ENCODE measurements at regions of chr13 and their contacts with region 1.

Region 1: DNA sequence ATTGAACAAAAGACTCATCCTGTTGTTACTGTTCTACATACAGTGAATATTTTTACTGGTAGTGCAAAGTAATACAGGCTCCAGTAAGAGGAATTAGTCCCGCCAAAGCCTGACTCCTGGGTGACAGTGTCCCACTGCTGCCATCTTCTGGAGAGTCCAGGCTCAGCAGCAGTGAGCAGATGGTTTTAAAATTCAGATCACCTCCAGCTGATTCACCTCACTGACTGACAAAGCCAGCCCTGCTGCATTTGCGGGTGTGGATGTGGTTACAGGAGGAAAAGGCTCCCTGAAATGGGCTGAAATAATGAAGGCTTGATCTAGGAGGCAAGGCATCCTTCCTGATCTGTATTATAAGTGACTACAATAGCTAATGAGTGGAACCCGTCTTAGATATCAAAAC is 18.3 kb downstream of the PABPC3 start:
- DNase-seq: peak; percentile 80 to 87
- H3K4me3 ChIP-seq: no peak overlapping the region
- H3K4me3 Mint-ChIP-seq: no peak overlapping the region
- H3K27ac Mint-ChIP-seq: no peak overlapping the region
- H3K4me1 ChIP-seq: peaks cover 33% of the 10 kb centered on the region
- H3K4me1 Mint-ChIP-seq: peaks cover 23% of the 10 kb centered on the region
- H3K27me3 ChIP-seq: no peaks in the 10 kb centered on the region; the same call in 1 of the 2 replicates
- H3K27me3 Mint-ChIP-seq: no peaks in the 10 kb centered on the region
- CTCF ChIP-seq: peak; percentile 76 to 95

Region 2: DNA sequence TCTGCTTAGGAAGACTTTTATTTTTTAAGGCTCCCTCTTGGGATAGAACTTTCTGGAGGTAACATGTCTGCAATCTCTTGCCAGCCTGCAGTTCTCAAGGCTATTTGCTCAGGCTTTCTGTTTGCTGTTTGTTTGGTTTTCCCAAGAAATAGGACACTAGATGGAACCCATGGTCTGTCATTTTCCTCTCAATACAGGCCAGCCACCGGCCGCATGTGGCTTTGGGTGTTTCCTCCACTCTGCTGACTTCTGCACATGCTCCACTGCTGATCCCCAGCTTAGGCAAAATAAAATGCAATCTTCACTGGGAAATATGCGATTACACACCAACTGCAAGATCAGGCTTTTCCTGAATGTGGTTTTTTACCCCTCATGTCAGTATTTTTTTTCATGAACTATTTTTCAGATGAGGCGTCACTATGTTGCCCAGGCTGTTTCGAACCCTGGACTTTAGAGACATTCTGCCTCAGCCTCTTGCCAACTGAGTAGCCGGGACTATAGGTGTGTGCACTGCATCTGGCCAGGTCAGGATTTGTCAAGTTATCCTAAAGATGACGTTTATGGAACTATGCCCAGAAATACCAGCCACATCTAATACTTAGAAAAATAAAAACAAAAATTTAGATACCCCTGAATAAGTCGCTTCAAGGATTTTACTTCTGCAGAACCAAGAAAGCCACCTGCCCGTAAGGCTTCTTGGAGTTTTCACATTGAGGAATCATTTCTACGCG is 112.6 kb before region 1 on chr13:
- CTCF ChIA-PET with region 1: interaction called, 10 read pairs
- POLR2A ChIA-PET with region 1: interaction called, 5 read pairs
- intact Hi-C with region 1: loop called (anchors 1 kb)
- DNase-seq: peak in 1 of 2 experiments; percentile 14
- H3K4me3 ChIP-seq: no peak overlapping the region
- H3K4me3 Mint-ChIP-seq: no peak overlapping the region
- H3K27ac Mint-ChIP-seq: peak overlapping the region; percentile 65
- H3K4me1 ChIP-seq: peaks cover 10% of the 10 kb centered on the region
- H3K4me1 Mint-ChIP-seq: peaks cover 14% of the 10 kb centered on the region
- H3K27me3 ChIP-seq: no peaks in the 10 kb centered on the region
- H3K27me3 Mint-ChIP-seq: no peaks in the 10 kb centered on the region
- CTCF ChIP-seq: no peak

Region 3: DNA sequence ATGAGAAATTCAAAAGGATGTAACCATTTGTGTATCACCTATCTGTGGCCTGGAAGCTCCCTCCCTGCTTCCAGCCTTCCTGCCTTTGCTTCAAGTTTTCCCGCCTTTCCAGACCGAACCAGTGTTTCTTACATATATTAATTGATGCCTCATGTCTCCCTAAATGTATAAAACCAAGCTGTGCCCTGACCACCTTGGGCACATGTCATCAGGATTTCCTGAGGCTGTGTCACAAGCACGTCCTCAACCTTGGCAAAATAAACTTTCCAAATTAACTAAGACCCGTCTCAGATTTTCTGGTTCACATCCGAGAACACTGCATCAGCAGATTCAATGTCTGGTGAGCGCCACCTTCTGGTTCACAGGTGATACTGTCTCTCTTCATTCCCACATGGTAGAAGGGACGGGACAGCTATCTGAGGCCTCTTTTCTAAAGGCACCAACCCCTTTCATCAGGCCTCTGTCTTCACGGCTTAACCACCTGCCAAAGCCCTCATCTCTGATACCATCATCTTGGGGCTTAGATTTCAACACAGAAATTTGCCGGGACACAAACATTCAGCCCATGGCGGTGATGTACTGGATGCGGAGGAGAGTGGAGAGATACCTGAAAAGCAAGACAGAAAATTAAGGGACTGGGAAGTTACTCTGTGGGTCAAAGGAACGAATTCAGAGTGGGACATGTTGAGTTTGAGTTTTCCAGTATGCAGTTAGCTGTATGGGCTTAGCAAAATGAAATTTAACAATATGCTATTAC is 77.0 kb before region 1 on chr13:
- CTCF ChIA-PET with region 1: interaction called, 4 read pairs
- POLR2A ChIA-PET with region 1: no interaction called
- intact Hi-C with region 1: loop called (anchors 1 kb)
- DNase-seq: peak; percentile 57 to 70
- H3K4me3 ChIP-seq: no peak overlapping the region
- H3K4me3 Mint-ChIP-seq: no peak overlapping the region
- H3K27ac Mint-ChIP-seq: no peak overlapping the region
- H3K4me1 ChIP-seq: no peaks in the 10 kb centered on the region
- H3K4me1 Mint-ChIP-seq: no peaks in the 10 kb centered on the region
- H3K27me3 ChIP-seq: no peaks in the 10 kb centered on the region
- H3K27me3 Mint-ChIP-seq: peaks cover 15% of the 10 kb centered on the region
- CTCF ChIP-seq: peak; percentile 84 to 89

Region 4: GRCh38 chr13:25062485-25062884 is 51.7 kb before region 1 on chr13:
- CTCF ChIA-PET with region 1: no interaction called
- POLR2A ChIA-PET with region 1: no interaction called
- intact Hi-C with region 1: loop called (anchors 1 kb)
- DNase-seq: no peak
- H3K4me3 ChIP-seq: no peak overlapping the region
- H3K4me3 Mint-ChIP-seq: no peak overlapping the region
- H3K27ac Mint-ChIP-seq: no peak overlapping the region
- H3K4me1 ChIP-seq: 0 out of 2 replicates have a peak, but pooled peaks cover 3% of the 10 kb centered on the region
- H3K4me1 Mint-ChIP-seq: no peaks in the 10 kb centered on the region
- H3K27me3 ChIP-seq: no peaks in the 10 kb centered on the region
- H3K27me3 Mint-ChIP-seq: peaks cover 3% of the 10 kb centered on the region
- CTCF ChIP-seq: peak in 1 of 2 experiments; percentile 9

Region 5: GRCh38 chr13:25085125-25085742 is 29.0 kb before region 1 on chr13:
- CTCF ChIA-PET with region 1: interaction called, 7 read pairs
- POLR2A ChIA-PET with region 1: no interaction called
- intact Hi-C with region 1: loop called (anchors 1 kb)
- DNase-seq: peak; percentile 50 to 60
- H3K4me3 ChIP-seq: no peak overlapping the region
- H3K4me3 Mint-ChIP-seq: no peak overlapping the region
- H3K27ac Mint-ChIP-seq: no peak overlapping the region
- H3K4me1 ChIP-seq: no peaks in the 10 kb centered on the region
- H3K4me1 Mint-ChIP-seq: no peaks in the 10 kb centered on the region
- H3K27me3 ChIP-seq: no peaks in the 10 kb centered on the region; the same call in 1 of the 2 replicates
- H3K27me3 Mint-ChIP-seq: peaks cover 2% of the 10 kb centered on the region
- CTCF ChIP-seq: peak; percentile 69 to 75

Measured in Caco-2 (cell line).